B cell (primary cell): ENCODE measurements at regions of chr1 and their contacts with region 1.

Region 1: DNA sequence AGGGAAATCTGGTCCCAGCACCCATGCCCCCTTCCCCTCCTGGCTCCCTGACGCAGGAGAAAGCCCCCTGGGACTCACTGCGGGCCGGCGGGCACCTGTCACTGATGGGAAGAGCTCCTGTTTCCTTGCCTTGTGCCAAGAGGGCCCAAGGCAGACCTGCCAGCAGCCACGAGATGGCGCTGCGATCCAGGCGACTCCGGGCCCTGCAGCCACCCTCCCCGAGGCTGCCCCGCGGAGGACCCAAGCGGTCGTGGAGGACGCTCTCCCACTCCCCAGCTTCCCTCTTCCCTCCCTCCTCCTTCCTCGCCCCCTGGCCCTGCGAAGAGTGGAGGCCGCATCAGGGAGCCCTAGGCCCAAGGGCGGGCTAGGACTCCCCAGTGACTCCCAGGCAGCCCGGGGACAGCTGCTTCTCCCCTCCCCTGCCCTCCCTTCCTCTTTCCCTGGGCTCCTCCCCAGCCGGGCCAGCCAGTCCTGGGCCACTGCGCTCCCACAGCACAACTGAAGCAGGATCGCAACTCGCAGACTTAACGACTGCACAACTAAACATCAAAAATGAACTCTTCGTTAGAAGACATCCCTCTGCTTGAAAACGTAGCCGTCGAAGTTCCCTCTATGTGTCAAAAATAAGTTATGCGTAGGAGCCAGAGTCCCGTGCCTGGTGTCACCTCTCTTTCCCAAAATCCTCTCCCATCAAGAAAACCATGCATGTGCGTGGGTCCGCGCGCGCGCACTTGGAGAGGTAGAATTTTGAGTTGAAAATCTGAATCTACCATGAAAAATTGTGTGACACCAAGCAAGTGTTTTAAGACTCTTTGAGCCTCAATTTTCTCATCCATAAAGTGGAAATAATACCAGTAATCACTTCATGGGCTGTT is 34.2 kb downstream of the BATF3 start:
- DNase-seq: peak; percentile 85
- ATAC-seq: peak; percentile 93
- H3K4me3 ChIP-seq: peak overlapping the region in 4 of 5 experiments; percentile 24 to 58 (median 48)
- H3K4me3 Mint-ChIP-seq: peak overlapping the region; percentile 79
- H3K27ac ChIP-seq: no peak overlapping the region
- H3K27ac Mint-ChIP-seq: no peak overlapping the region
- H3K4me1 ChIP-seq: peaks cover 6 to 22% of the 10 kb centered on the region in 2 donors
- H3K4me1 Mint-ChIP-seq: peaks cover 16% of the 10 kb centered on the region
- H3K27me3 ChIP-seq: peaks cover 0 to 6% (median 0%) of the 10 kb centered on the region in 4 experiments
- H3K27me3 Mint-ChIP-seq: no peaks in the 10 kb centered on the region
- CTCF ChIP-seq: peak; percentile 93

Region 2: DNA sequence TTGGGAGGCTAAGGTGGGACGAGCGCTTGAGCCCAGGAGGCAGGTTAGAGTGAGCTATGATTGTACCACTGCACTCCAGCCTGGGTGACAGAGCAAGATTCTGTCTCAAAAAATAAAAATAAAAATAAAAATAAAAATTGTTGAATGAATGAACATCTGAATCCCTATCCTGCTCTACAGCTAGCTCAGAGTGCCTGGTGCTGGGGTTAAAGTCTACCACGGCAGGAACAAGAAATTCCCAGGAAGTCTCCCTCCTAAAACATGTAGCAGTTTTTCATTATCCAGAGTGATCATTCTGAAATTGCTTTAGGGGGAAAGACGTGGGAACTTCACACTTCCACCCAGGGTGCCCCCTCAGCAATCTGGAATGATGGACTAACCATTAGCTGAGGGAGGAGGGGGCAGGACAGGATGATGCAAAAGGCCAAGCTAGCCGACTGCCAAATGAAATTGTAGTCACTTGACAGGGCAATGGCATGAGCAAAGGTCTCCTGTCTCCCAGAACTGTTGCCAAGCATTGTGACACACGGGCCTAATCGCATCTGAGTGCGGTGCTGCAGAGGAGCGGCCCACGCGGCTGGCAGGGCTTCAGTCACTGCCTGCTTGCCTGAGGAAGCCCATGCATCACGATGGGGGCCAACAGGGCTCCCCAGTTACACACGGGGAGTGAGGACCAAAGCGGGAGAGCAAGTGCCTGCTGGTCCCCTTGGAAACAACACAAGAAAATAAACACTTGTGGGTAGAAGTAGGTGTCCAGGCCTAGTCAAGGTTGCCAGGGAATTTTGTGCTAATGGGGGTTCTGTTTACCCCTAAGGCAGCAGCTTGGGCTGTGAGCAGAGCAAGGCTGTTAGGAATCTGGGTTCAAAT is 147.1 kb before region 1 on chr1:
- CTCF ChIA-PET with region 1: no interaction called
- POLR2A ChIA-PET with region 1: no interaction called
- intact Hi-C with region 1: no loop called
- DNase-seq: no peak
- ATAC-seq: no peak
- H3K4me3 ChIP-seq: no peak overlapping the region
- H3K4me3 Mint-ChIP-seq: no peak overlapping the region
- H3K27ac ChIP-seq: no peak overlapping the region
- H3K27ac Mint-ChIP-seq: no peak overlapping the region
- H3K4me1 ChIP-seq: peaks cover 7% of the 10 kb centered on the region in 2 donors
- H3K4me1 Mint-ChIP-seq: peaks cover 7% of the 10 kb centered on the region
- H3K27me3 ChIP-seq: peaks cover 0 to 25% (median 12%) of the 10 kb centered on the region in 4 experiments
- H3K27me3 Mint-ChIP-seq: peaks cover 49% of the 10 kb centered on the region
- CTCF ChIP-seq: no peak

Region 3: DNA sequence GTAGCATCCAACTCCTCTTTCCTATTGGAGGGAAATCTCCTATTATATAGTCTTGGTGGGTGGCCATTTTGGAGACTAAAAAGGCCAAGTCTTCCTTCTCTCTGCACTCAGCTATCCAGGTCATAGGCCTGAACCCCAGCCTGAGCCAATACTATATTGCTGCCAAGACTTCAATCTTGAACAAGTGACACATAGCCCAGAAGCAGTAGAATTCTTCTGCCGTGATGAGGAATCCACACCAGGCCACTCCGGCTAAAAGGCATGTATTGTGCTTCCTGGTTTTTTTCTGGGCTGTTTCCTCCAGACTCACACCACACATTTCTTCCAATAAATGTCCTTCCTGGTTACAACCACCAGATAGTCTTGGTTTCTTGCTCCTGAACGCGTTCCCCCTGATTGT is 14.0 kb before region 1 on chr1:
- CTCF ChIA-PET with region 1: interaction called, 14 read pairs
- POLR2A ChIA-PET with region 1: no interaction called
- intact Hi-C with region 1: no loop called
- DNase-seq: no peak
- ATAC-seq: no peak
- H3K4me3 ChIP-seq: no peak overlapping the region
- H3K4me3 Mint-ChIP-seq: no peak overlapping the region
- H3K27ac ChIP-seq: no peak overlapping the region
- H3K27ac Mint-ChIP-seq: no peak overlapping the region
- H3K4me1 ChIP-seq: peaks cover 0 to 3% of the 10 kb centered on the region in 2 donors
- H3K4me1 Mint-ChIP-seq: no peaks in the 10 kb centered on the region
- H3K27me3 ChIP-seq: peaks cover 0 to 14% (median 0%) of the 10 kb centered on the region in 4 experiments
- H3K27me3 Mint-ChIP-seq: peaks cover 7% of the 10 kb centered on the region
- CTCF ChIP-seq: no peak

Region 4: DNA sequence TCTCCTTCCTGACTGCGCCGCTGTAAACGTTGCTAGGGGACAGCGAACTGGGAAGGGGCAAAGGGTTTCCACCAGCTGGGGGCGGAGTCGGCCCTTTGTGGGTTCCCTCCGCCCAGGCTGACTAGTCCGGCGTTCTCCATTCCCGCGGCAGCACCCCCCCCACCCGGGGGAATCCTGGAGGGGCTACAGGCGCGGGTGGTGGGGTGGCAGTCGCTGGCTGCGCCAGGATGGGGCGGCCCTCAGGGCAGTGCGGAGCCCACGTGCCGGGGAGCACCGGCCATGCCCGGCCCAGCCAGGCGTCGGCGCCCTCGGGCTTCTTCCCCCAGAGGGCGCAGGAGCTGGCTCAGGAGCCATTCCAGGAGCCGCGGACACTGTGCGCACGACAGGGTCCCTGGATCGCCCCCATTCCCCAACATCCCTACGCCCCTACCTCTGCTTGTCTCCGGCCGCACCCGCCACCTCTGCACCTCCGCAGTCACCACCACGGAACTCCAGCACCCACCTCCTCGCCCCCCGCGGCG is 33.7 kb after region 1 on chr1:
- CTCF ChIA-PET with region 1: interaction called, 10 read pairs
- POLR2A ChIA-PET with region 1: no interaction called
- intact Hi-C with region 1: loop called (anchors 1 kb)
- DNase-seq: peak; percentile 69
- ATAC-seq: peak; percentile 65
- H3K4me3 ChIP-seq: peak overlapping the region; percentile 34 to 70 (median 65)
- H3K4me3 Mint-ChIP-seq: peak overlapping the region; percentile 92
- H3K27ac ChIP-seq: no peak overlapping the region
- H3K27ac Mint-ChIP-seq: peak overlapping the region; percentile 27
- H3K4me1 ChIP-seq: peaks cover 31 to 36% of the 10 kb centered on the region in 2 donors
- H3K4me1 Mint-ChIP-seq: peaks cover 39% of the 10 kb centered on the region
- H3K27me3 ChIP-seq: peaks cover 0 to 14% (median 3%) of the 10 kb centered on the region in 4 experiments
- H3K27me3 Mint-ChIP-seq: peaks cover 4% of the 10 kb centered on the region
- CTCF ChIP-seq: peak; percentile 69

Region 5: DNA sequence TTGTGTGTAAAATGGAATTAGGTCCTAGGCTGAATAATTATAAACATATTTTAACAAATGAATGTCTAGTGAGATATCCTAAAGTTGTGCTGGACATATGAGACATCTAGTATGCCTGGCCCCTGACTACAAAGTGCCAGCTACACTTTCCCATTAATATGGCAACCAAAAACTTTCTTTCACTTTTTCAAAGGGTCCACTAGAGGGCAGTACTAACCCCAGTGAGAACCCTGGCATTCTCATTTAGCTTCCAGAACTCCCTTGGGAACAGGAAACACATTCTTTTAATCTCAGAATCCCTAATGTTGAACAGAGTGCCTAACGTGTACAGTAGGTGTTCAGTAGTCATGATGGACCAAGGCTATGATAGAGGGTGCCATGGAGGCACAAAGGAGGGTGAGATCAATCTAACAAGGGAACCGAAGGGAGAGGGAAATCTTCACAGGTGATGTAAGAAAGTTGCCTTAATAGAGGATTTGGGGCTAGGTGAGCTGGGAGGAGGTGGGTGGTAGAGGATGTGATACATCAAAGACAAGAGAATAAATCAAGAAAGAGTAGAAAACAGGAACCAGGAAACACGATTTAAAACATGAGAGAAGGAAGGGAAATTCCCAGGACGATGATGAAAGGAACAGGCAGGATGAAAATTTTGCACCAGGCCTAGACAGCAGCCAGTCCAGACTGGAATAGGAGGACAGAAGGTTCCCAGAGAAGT is 84.5 kb after region 1 on chr1:
- CTCF ChIA-PET with region 1: interaction called, 10 read pairs
- POLR2A ChIA-PET with region 1: no interaction called
- intact Hi-C with region 1: no loop called
- DNase-seq: peak; percentile 42
- ATAC-seq: peak; percentile 34
- H3K4me3 ChIP-seq: no peak overlapping the region
- H3K4me3 Mint-ChIP-seq: peak overlapping the region; percentile 0
- H3K27ac ChIP-seq: peak overlapping the region in 1 of 2 donors; percentile 80
- H3K27ac Mint-ChIP-seq: peak overlapping the region; percentile 15
- H3K4me1 ChIP-seq: peaks cover 34 to 39% of the 10 kb centered on the region in 2 donors
- H3K4me1 Mint-ChIP-seq: peaks cover 37% of the 10 kb centered on the region
- H3K27me3 ChIP-seq: no peaks in the 10 kb centered on the region
- H3K27me3 Mint-ChIP-seq: no peaks in the 10 kb centered on the region
- CTCF ChIP-seq: peak; percentile 62

Region 6: GRCh38 chr1:212782422-212783154 is 117.1 kb after region 1 on chr1:
- CTCF ChIA-PET with region 1: interaction called, 90 read pairs
- POLR2A ChIA-PET with region 1: no interaction called
- intact Hi-C with region 1: loop called (anchors 1 kb)
- DNase-seq: peak; percentile 54
- ATAC-seq: peak; percentile 51
- H3K4me3 ChIP-seq: no peak overlapping the region
- H3K4me3 Mint-ChIP-seq: no peak overlapping the region
- H3K27ac ChIP-seq: no peak overlapping the region
- H3K27ac Mint-ChIP-seq: no peak overlapping the region
- H3K4me1 ChIP-seq: no peaks in the 10 kb centered on the region
- H3K4me1 Mint-ChIP-seq: no peaks in the 10 kb centered on the region
- H3K27me3 ChIP-seq: no peaks in the 10 kb centered on the region
- H3K27me3 Mint-ChIP-seq: no peaks in the 10 kb centered on the region
- CTCF ChIP-seq: peak; percentile 87